Heart right ventricle (tissue), 16 donors: ENCODE measurements at regions of chr7 and their contacts with region 1.

Region 1: DNA sequence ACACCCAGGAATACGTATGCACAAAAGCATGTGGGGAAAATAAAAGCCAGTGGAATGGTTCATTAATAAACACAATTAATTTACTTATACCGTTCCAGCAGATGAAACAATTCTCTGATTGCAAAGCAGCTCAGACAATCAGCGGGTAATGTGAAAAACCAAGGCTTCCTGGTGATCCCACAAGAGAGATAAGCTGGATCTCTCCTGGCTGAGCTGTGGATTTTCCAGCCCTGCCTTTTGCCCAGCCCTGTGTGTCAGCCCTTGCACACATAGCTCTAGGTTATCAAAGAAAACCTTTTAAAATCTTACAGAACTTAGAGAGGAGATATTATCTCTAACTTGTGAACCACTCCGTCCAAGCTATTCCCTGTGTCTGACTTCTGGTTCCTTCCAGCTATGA is 1010.7 kb upstream of the AUTS2 start:
- DNase-seq: no peak
- ATAC-seq: no peak
- H3K4me3 ChIP-seq: no peak overlapping the region
- H3K27ac ChIP-seq: no peak overlapping the region
- H3K4me1 ChIP-seq: no peaks in the 10 kb centered on the region
- H3K27me3 ChIP-seq: peaks cover 0 to 12% (median 0%) of the 10 kb centered on the region in 7 donors
- CTCF ChIP-seq: no peak

Region 2: GRCh38 chr7:68562323-68562899 is 25.2 kb before region 1 on chr7:
- intact Hi-C with region 1: loop called in 1 of 10 experiments (anchors 2 kb)
- DNase-seq: no peak
- ATAC-seq: no peak
- H3K4me3 ChIP-seq: no peak overlapping the region
- H3K27ac ChIP-seq: no peak overlapping the region
- H3K4me1 ChIP-seq: no peaks in the 10 kb centered on the region
- H3K27me3 ChIP-seq: peaks cover 0 to 9% (median 0%) of the 10 kb centered on the region in 7 donors
- CTCF ChIP-seq: no peak